CD4-positive, alpha-beta memory T cell (primary cell): ENCODE measurements at regions of chr18 and their contacts with region 1.

Region 1: DNA sequence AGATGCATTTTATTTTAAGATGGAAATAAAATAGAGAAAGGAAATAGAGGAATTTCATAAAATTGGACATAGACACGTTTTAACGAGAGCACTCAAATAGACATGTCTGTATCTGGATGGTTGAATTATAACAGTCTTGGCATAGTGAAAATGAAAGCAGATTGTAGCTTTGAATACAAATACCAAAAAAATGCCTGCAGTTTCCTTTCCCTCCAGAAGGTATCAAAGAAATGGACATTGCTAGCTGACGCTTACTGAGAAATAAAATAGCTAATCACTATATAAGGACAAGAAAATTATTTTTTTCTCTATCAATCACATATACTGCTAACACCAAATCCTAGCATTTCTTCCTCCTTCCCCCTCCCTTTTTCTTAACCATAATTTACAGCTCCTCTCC is 11.4 kb upstream of the MAPRE2 start:
- DNase-seq: peak in 4 of 5 donors; percentile 47 to 62 (median 56)
- H3K4me3 ChIP-seq: peak overlapping the region; percentile 25 to 60
- H3K4me3 Mint-ChIP-seq: peak overlapping the region; percentile 81 to 94 (median 88)
- H3K27ac ChIP-seq: peak overlapping the region; percentile 80
- H3K27ac Mint-ChIP-seq: peak overlapping the region; percentile 84 to 99 (median 98)
- H3K4me1 ChIP-seq: peaks cover 36% of the 10 kb centered on the region
- H3K4me1 Mint-ChIP-seq: peaks cover 34 to 45% (median 40%) of the 10 kb centered on the region in 4 donors
- H3K27me3 ChIP-seq: no peaks in the 10 kb centered on the region
- H3K27me3 Mint-ChIP-seq: no peaks in the 10 kb centered on the region

Region 2: GRCh38 chr18:35005963-35006577 is 23.7 kb before region 1 on chr18:
- CTCF ChIA-PET with region 1: interaction called, 18 read pairs
- POLR2A ChIA-PET with region 1: interaction called, 4 read pairs
- intact Hi-C with region 1: no loop called
- DNase-seq: peak; percentile 35 to 63 (median 51)
- H3K4me3 ChIP-seq: no peak overlapping the region
- H3K4me3 Mint-ChIP-seq: no peak overlapping the region
- H3K27ac ChIP-seq: no peak overlapping the region
- H3K27ac Mint-ChIP-seq: no peak overlapping the region
- H3K4me1 ChIP-seq: no peaks in the 10 kb centered on the region
- H3K4me1 Mint-ChIP-seq: no peaks in the 10 kb centered on the region
- H3K27me3 ChIP-seq: no peaks in the 10 kb centered on the region
- H3K27me3 Mint-ChIP-seq: peaks cover 0 to 3% of the 10 kb centered on the region in 2 donors

Region 3: DNA sequence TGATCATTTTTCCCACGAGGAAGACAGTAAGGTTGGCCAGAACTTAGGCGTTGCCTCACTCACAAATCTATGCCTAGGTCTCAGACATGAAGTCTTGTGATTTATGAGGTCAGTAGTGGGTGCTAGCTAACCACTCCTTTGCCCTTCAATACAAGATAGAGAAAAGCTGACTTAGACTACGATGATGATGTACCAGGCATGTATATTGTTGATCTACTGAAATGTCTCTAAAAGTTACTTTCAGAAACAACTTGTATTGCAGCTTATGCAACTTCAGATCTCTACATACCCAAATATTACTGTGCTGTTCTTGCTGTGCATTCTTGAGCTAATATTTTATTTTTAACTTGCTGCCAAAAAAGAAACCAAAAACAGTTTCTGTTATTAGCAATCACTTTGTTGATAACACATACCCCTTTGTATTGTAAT is 42.1 kb after region 1 on chr18:
- CTCF ChIA-PET with region 1: interaction called, 4 read pairs
- POLR2A ChIA-PET with region 1: interaction called, 4 read pairs
- intact Hi-C with region 1: loop called (anchors 5 kb)
- DNase-seq: no peak
- H3K4me3 ChIP-seq: no peak overlapping the region
- H3K4me3 Mint-ChIP-seq: no peak overlapping the region
- H3K27ac ChIP-seq: no peak overlapping the region
- H3K27ac Mint-ChIP-seq: peak overlapping the region in 3 of 7 donors; percentile 27 to 63 (median 43)
- H3K4me1 ChIP-seq: no peaks in the 10 kb centered on the region
- H3K4me1 Mint-ChIP-seq: peaks cover 22 to 53% (median 33%) of the 10 kb centered on the region in 4 donors
- H3K27me3 ChIP-seq: no peaks in the 10 kb centered on the region
- H3K27me3 Mint-ChIP-seq: no peaks in the 10 kb centered on the region

Region 4: DNA sequence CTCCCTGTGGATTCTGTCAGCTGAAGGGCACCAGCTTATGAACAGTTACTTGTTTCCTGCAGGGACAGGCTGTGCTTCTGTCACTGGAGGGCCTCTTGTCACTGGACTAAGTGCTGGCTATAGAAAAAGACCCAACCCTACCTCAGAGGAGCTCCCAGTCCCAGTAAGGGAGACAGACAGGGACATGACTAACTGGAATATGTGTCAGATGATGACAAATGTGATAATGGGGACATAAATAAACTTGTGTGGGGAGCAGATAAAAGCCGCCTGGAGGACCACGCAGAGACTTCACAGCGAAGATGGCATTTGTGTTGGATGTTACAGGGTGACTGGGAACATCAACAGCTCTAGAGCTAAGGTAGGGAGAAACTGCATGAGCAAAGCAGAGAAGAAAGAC is 106.5 kb after region 1 on chr18:
- CTCF ChIA-PET with region 1: interaction called, 128 read pairs
- POLR2A ChIA-PET with region 1: interaction called, 3 read pairs
- intact Hi-C with region 1: no loop called
- DNase-seq: no peak
- H3K4me3 ChIP-seq: no peak overlapping the region
- H3K4me3 Mint-ChIP-seq: no peak overlapping the region
- H3K27ac ChIP-seq: no peak overlapping the region
- H3K27ac Mint-ChIP-seq: peak overlapping the region in 2 of 7 donors; percentile 21 to 71
- H3K4me1 ChIP-seq: no peaks in the 10 kb centered on the region
- H3K4me1 Mint-ChIP-seq: peaks cover 0 to 4% (median under 1%) of the 10 kb centered on the region in 4 donors
- H3K27me3 ChIP-seq: no peaks in the 10 kb centered on the region
- H3K27me3 Mint-ChIP-seq: no peaks in the 10 kb centered on the region

Region 5: DNA sequence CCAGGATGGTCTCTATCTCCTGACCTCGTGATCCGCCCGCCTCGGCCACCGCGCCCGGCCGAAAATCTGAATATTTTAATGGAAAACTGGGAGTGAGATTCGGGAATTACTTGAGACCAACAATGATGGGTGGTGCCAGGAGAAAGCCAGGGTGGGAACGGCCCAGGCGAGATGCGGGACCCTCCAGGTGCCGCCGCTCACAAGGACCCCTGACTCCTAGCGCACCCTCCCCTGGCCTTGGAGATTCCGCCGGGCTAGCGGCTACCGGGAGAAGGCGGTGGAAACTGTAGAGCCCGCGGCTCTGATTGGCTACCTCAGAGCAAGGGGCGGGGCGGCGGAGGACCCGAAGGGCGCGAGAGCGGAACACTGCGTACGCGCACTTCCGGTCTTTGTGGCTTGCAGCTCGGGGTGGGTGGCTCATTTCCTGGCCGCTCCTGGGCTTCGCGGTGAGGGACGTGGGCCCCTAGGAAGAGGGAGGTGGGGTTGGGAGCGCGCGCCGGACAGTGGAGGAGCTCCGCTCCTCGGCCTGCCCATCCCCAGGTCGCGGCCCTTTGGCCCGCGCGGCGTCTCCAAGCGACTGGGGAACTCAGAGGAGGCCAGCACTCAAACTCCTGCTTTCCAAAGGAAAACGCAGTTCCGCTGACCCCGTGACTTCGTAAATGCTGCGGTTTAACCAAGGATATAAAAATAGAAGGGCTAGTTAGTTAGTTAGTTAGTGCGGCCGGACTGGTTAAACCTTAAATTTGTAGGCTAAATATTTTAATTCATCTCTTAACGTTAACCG is 211.1 kb after region 1 on chr18 and contains the start of gene ZNF397:
- CTCF ChIA-PET with region 1: interaction called, 16 read pairs
- POLR2A ChIA-PET with region 1: interaction called, 15 read pairs
- intact Hi-C with region 1: loop called (anchors 1 kb)
- DNase-seq: peak; percentile 91 to 94 (median 92)
- H3K4me3 ChIP-seq: peak within 1 kb of the TSS; percentile 81 to 90
- H3K4me3 Mint-ChIP-seq: peak within 1 kb of the TSS; percentile 96 to 98 (median 96)
- H3K27ac ChIP-seq: peak within 1 kb of the TSS; percentile 95
- H3K27ac Mint-ChIP-seq: peak within 1 kb of the TSS; percentile 94 to 100 (median 99)
- H3K4me1 ChIP-seq: peaks cover 17% of the 10 kb centered on the region
- H3K4me1 Mint-ChIP-seq: peaks cover 10 to 40% (median 15%) of the 10 kb centered on the region in 4 donors
- H3K27me3 ChIP-seq: no peaks in the 10 kb centered on the region
- H3K27me3 Mint-ChIP-seq: no peaks in the 10 kb centered on the region
- total RNA-seq, gene ZNF397: 56.1 to 58.5 TPM

Region 6: GRCh38 chr18:35386600-35387351 is 357.0 kb after region 1 on chr18:
- CTCF ChIA-PET with region 1: interaction called, 7 read pairs
- POLR2A ChIA-PET with region 1: no interaction called
- intact Hi-C with region 1: loop called (anchors 2 kb)
- DNase-seq: peak; percentile 69 to 73 (median 73)
- H3K4me3 ChIP-seq: no peak overlapping the region
- H3K4me3 Mint-ChIP-seq: peak overlapping the region in 2 of 8 donors; percentile 29 to 65
- H3K27ac ChIP-seq: no peak overlapping the region
- H3K27ac Mint-ChIP-seq: peak overlapping the region in 2 of 7 donors; percentile 6 to 32
- H3K4me1 ChIP-seq: peaks cover 5% of the 10 kb centered on the region
- H3K4me1 Mint-ChIP-seq: peaks cover 0 to 4% (median 2%) of the 10 kb centered on the region in 4 donors
- H3K27me3 ChIP-seq: peaks cover 5% of the 10 kb centered on the region
- H3K27me3 Mint-ChIP-seq: peaks cover 8 to 25% of the 10 kb centered on the region in 2 donors